ENCODE measurements at regions of chr15 and their contacts with region 1.

Region 1: GRCh38 chr15:85730001-85730820 is 64.5 kb downstream of the KLHL25 start:
- DNase-seq: peak; percentile 41
- ATAC-seq: peak; percentile 88
- H3K4me3 ChIP-seq: no peak overlapping the region
- H3K27ac ChIP-seq: no peak overlapping the region
- H3K4me1 ChIP-seq: no peaks in the 10 kb centered on the region
- H3K27me3 ChIP-seq: no peaks in the 10 kb centered on the region
- CTCF ChIP-seq: peak; percentile 83

Region 2: GRCh38 chr15:85515212-85515611 is 215.0 kb before region 1 on chr15:
- CTCF ChIA-PET with region 1: no interaction called
- POLR2A ChIA-PET with region 1: no interaction called
- in situ Hi-C with region 1: no loop called
- intact Hi-C with region 1: no loop called
- DNase-seq: no peak
- ATAC-seq: no peak
- H3K4me3 ChIP-seq: no peak overlapping the region
- H3K27ac ChIP-seq: no peak overlapping the region
- H3K4me1 ChIP-seq: peaks cover 5% of the 10 kb centered on the region; the same call in 1 of the 2 replicates
- H3K27me3 ChIP-seq: no peaks in the 10 kb centered on the region
- CTCF ChIP-seq: no peak

Region 3: GRCh38 chr15:85757939-85758654 is 27.9 kb after region 1 on chr15:
- CTCF ChIA-PET with region 1: no interaction called
- POLR2A ChIA-PET with region 1: no interaction called
- in situ Hi-C with region 1: no loop called
- intact Hi-C with region 1: loop called (anchors 1 kb)
- DNase-seq: no peak
- ATAC-seq: 0 out of 2 replicates have a peak, but pooled peaks have one; percentile 20
- H3K4me3 ChIP-seq: no peak overlapping the region
- H3K27ac ChIP-seq: no peak overlapping the region
- H3K4me1 ChIP-seq: peaks cover under 1% of the 10 kb centered on the region; the same call in 1 of the 2 replicates
- H3K27me3 ChIP-seq: no peaks in the 10 kb centered on the region
- CTCF ChIP-seq: no peak

Region 4: DNA sequence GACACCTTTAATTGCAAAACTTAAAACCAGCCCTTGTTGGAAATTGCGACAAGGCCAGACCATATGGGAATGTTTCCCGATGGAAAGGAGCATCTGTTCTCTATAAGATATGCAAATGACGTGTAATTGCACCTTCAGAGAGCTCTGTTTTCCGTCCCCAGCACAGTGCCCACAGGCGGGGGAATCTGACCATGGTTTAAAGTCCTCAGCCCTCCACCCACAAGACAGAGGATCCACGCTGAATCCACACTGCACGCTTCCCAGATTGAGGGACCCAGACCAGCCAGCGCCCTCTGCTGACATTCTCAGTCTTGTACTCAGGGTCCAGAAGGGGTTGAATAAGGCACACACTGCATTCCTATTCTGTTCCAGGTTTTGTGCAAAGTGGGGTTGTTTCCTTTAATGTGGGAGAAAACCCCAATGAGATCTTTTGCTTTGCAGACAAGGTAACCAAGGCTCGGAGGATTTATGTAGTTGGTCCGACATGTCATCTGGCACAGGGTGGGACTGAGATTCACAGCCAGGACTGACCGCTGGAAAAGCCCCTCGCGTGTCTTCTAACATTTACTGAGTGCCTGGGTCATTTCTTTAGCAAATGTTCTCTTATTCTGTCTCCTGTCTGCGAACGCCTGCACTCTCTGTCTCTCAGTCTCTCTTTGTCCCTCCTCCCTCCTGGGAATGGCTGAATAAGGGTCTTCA is 101.4 kb after region 1 on chr15:
- CTCF ChIA-PET with region 1: interaction called, 3 read pairs
- POLR2A ChIA-PET with region 1: no interaction called
- in situ Hi-C with region 1: no loop called
- intact Hi-C with region 1: loop called (anchors 2 kb)
- DNase-seq: no peak
- ATAC-seq: peak; percentile 86
- H3K4me3 ChIP-seq: no peak overlapping the region
- H3K27ac ChIP-seq: no peak overlapping the region
- H3K4me1 ChIP-seq: no peaks in the 10 kb centered on the region
- H3K27me3 ChIP-seq: no peaks in the 10 kb centered on the region
- CTCF ChIP-seq: peak; percentile 81

Region 5: GRCh38 chr15:85840065-85840801 is 110.0 kb after region 1 on chr15:
- CTCF ChIA-PET with region 1: interaction called, 3 read pairs
- POLR2A ChIA-PET with region 1: no interaction called
- in situ Hi-C with region 1: no loop called
- intact Hi-C with region 1: loop called (anchors 1 kb)
- DNase-seq: no peak
- ATAC-seq: peak; percentile 96
- H3K4me3 ChIP-seq: peak overlapping the region; percentile 21 to 57
- H3K27ac ChIP-seq: no peak overlapping the region
- H3K4me1 ChIP-seq: peaks cover 8% of the 10 kb centered on the region
- H3K27me3 ChIP-seq: 0 out of 2 replicates have a peak, but pooled peaks cover 2% of the 10 kb centered on the region
- CTCF ChIP-seq: peak; percentile 98

Measured in Panc1 (cell line).